Calu3 (cell line): ENCODE measurements at regions of chr19 and their contacts with region 1.

Region 1: DNA sequence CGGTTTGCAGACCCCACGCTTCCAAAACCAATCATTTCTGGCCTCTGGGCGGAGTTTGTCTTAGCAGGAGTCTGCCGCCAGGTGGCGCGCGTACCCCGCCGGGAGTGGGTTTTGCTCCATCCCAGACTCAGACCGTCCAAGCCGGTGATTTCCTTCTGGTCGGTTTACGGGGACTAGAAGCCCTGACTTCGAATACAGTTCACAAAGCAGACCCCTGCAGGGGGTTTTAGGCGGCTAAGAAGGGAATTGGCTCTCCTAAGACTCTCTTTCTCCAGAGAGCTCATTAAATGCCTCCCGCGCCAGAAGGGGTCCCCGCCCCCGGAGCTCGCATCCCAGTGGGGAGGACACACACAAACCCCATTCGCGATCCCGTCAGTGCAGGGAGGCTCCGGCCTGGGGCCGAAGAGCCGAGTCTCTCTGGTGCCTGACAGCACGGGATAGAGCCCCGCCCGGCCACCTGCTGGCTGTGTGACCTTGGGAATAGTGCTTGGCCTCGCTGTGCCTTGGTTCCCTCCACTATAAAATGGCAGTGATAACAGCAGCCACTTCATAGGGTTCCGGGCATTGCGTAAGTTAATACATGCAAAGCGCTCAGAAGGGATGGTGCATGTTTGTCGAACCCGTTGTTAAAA is 8.6 kb upstream of the NUP62 start:
- DNase-seq: peak; percentile 91
- H3K4me3 Mint-ChIP-seq: peak overlapping the region; percentile 36
- H3K27ac Mint-ChIP-seq: no peak overlapping the region
- H3K4me1 Mint-ChIP-seq: peaks cover 21% of the 10 kb centered on the region
- H3K27me3 Mint-ChIP-seq: peaks cover 36% of the 10 kb centered on the region
- CTCF ChIP-seq: peak; percentile 99

Region 2: GRCh38 chr19:49896863-49897621 is 40.8 kb before region 1 on chr19 and contains the start of gene IL4I1:
- CTCF ChIA-PET with region 1: no interaction called
- intact Hi-C with region 1: no loop called
- DNase-seq: peak; percentile 63
- H3K4me3 Mint-ChIP-seq: peak within 1 kb of the TSS; percentile 47
- H3K27ac Mint-ChIP-seq: peak within 1 kb of the TSS; percentile 57
- H3K4me1 Mint-ChIP-seq: peaks cover 22% of the 10 kb centered on the region
- H3K27me3 Mint-ChIP-seq: peaks cover 15% of the 10 kb centered on the region
- CTCF ChIP-seq: no peak
- total RNA-seq, gene IL4I1: 8.2 and 10.7 TPM in 2 replicates

Region 3: GRCh38 chr19:49983645-49984229 is 45.9 kb after region 1 on chr19:
- CTCF ChIA-PET with region 1: no interaction called
- intact Hi-C with region 1: loop called (anchors 1 kb)
- DNase-seq: peak; percentile 85
- H3K4me3 Mint-ChIP-seq: no peak overlapping the region
- H3K27ac Mint-ChIP-seq: no peak overlapping the region
- H3K4me1 Mint-ChIP-seq: no peaks in the 10 kb centered on the region
- H3K27me3 Mint-ChIP-seq: no peaks in the 10 kb centered on the region
- CTCF ChIP-seq: peak; percentile 97

Region 4: GRCh38 chr19:49997709-49998108 is 59.8 kb after region 1 on chr19:
- CTCF ChIA-PET with region 1: no interaction called
- intact Hi-C with region 1: no loop called
- DNase-seq: peak; percentile 41
- H3K4me3 Mint-ChIP-seq: no peak overlapping the region
- H3K27ac Mint-ChIP-seq: no peak overlapping the region
- H3K4me1 Mint-ChIP-seq: peaks cover under 1% of the 10 kb centered on the region
- H3K27me3 Mint-ChIP-seq: no peaks in the 10 kb centered on the region
- CTCF ChIP-seq: no peak